Heart right ventricle (tissue), 16 donors: ENCODE measurements at regions of chr12 and their contacts with region 1.

Region 1: DNA sequence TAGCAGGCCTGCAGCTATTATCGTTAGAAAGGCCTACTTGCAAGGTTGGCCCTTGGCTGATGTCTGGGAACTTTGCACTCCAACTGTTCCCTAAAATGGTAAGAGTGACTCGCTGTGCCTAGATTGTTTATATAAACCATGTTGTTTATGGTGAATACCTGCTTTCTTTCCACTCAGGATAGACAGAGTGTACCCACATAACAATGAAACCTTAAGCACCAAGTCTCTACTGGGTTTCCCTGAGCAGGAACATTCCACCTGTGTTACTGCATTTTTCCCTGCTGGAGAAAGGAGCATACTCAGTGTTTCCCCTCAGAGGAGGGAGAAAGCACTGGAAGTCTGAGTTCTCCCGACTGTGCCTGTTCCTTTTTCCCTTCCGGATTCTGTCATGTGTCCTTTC is 32.8 kb downstream of the ERP29 start:
- DNase-seq: no peak
- ATAC-seq: peak in 1 of 8 donors; percentile 24
- H3K4me3 ChIP-seq: no peak overlapping the region
- H3K27ac ChIP-seq: peak overlapping the region in 1 of 10 donors; percentile 3
- H3K4me1 ChIP-seq: peaks cover 0 to 11% (median 0%) of the 10 kb centered on the region in 9 donors
- H3K27me3 ChIP-seq: no peaks in the 10 kb centered on the region
- CTCF ChIP-seq: no peak

Region 2: DNA sequence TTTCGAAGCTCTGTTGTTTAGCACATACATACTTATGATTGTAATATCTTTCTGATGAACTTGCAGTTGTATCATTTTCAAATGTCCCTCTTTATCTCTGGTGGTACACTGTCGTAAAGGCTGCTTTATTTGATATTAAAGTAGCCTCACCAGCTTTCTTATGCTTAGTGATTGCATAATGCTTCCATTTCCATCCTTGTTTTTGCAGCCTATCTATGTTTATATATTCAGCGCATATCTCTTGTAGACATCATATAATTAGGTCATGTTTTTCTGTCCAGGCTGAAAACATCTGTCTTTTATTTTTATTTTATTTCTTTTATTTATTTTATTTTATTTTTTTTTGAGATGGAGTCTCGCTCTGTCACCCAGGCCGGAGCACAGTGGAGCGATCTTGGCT is 325.5 kb before region 1 on chr12:
- intact Hi-C with region 1: no loop called
- DNase-seq: no peak
- ATAC-seq: no peak
- H3K4me3 ChIP-seq: no peak overlapping the region
- H3K27ac ChIP-seq: no peak overlapping the region
- H3K4me1 ChIP-seq: peaks cover 0 to 8% (median 2%) of the 10 kb centered on the region in 9 donors
- H3K27me3 ChIP-seq: no peaks in the 10 kb centered on the region
- CTCF ChIP-seq: no peak

Region 3: GRCh38 chr12:111868676-111869588 is 177.1 kb before region 1 on chr12:
- intact Hi-C with region 1: loop called in 1 of 10 experiments (anchors 10 kb)
- DNase-seq: no peak
- ATAC-seq: no peak
- H3K4me3 ChIP-seq: no peak overlapping the region
- H3K27ac ChIP-seq: no peak overlapping the region
- H3K4me1 ChIP-seq: no peaks in the 10 kb centered on the region
- H3K27me3 ChIP-seq: no peaks in the 10 kb centered on the region
- CTCF ChIP-seq: no peak

Region 4: GRCh38 chr12:111981987-111982386 is 64.0 kb before region 1 on chr12:
- intact Hi-C with region 1: no loop called
- DNase-seq: no peak
- ATAC-seq: no peak
- H3K4me3 ChIP-seq: no peak overlapping the region
- H3K27ac ChIP-seq: no peak overlapping the region
- H3K4me1 ChIP-seq: peaks cover 0 to 7% (median 0%) of the 10 kb centered on the region in 9 donors
- H3K27me3 ChIP-seq: no peaks in the 10 kb centered on the region
- CTCF ChIP-seq: no peak

Region 5: GRCh38 chr12:112252184-112252583 is 206.2 kb after region 1 on chr12:
- intact Hi-C with region 1: loop called in 1 of 10 experiments (anchors 10 kb)
- DNase-seq: no peak
- ATAC-seq: no peak
- H3K4me3 ChIP-seq: no peak overlapping the region
- H3K27ac ChIP-seq: no peak overlapping the region
- H3K4me1 ChIP-seq: no peaks in the 10 kb centered on the region
- H3K27me3 ChIP-seq: no peaks in the 10 kb centered on the region
- CTCF ChIP-seq: no peak